HEK293 (cell line): ENCODE measurements at regions of chr2 and their contacts with region 1.

Region 1: GRCh38 chr2:47751875-47752357 is 31.0 kb upstream of the MSH6 start:
- H3K4me3 ChIP-seq: no peak overlapping the region
- H3K27ac ChIP-seq: peak overlapping the region; percentile 25; the same call in 1 of the 2 replicates
- H3K4me1 ChIP-seq: peaks cover 16% of the 10 kb centered on the region
- CTCF ChIP-seq: no peak

Region 2: GRCh38 chr2:47402805-47403608 is 348.9 kb before region 1 on chr2 and contains the start of gene MSH2:
- CTCF ChIA-PET with region 1: no interaction called
- POLR2A ChIA-PET with region 1: no interaction called
- H3K4me3 ChIP-seq: peak within 1 kb of the TSS; percentile 86
- H3K27ac ChIP-seq: peak within 1 kb of the TSS; percentile 85
- H3K4me1 ChIP-seq: peaks cover 5% of the 10 kb centered on the region; the same call in 1 of the 2 replicates
- CTCF ChIP-seq: peak; percentile 51

Region 3: GRCh38 chr2:47741094-47741493 is 10.8 kb before region 1 on chr2:
- CTCF ChIA-PET with region 1: interaction called, 3 read pairs
- POLR2A ChIA-PET with region 1: interaction called, 14 read pairs
- H3K4me3 ChIP-seq: no peak overlapping the region
- H3K27ac ChIP-seq: no peak overlapping the region
- H3K4me1 ChIP-seq: no peaks in the 10 kb centered on the region
- CTCF ChIP-seq: no peak

Region 4: GRCh38 chr2:47984041-47984440 is 232.1 kb after region 1 on chr2:
- CTCF ChIA-PET with region 1: no interaction called
- POLR2A ChIA-PET with region 1: no interaction called
- H3K4me3 ChIP-seq: no peak overlapping the region
- H3K27ac ChIP-seq: no peak overlapping the region
- H3K4me1 ChIP-seq: no peaks in the 10 kb centered on the region
- CTCF ChIP-seq: no peak